Heart left ventricle (tissue), 16 donors: ENCODE measurements at regions of chr3 and their contacts with region 1.

Region 1: DNA sequence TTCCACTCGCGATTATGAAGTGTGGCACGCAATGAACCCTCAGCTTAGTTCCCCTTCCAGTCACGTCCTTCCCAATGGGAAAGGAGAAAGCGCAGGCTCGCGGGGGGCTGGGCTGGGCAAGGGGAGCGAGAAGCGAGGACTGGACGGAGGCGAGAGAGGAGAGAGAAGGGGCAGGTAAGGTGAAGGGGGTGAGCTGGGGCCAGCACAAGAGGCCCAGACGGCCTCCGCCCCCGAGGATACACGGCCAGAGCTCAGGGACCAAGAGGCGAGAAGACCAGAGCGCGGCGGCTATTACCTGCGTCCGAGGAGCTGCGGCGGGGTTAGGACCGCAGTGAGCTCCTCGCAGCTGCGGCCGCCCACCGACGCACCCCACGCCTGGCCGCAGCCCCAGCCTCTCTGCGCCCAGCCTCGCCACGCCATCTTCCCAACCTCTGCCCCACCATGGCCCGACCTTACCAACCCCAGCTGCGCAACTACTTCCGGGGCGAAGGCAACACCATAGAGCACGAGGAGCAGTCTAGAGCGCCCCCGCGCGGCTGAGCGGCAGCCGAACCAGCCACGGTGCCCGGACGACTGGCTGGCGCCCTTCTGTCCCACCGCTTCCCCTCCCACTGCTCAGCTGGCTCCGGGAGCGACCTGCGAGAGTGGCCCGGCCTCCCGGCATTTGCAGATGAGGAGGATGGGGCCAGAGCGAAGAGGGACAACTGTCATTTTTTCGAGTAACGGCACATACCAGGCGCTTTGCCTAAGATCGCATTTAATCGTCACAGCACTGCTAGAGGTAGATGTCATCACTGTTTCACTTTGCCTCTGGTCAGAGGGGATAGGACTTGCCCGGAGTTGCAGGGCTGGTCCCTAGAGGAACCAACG is at the start of gene PARL:
- DNase-seq: peak; percentile 95 to 98 (median 97)
- ATAC-seq: peak; percentile 100
- H3K4me3 ChIP-seq: peak within 1 kb of the TSS; percentile 54 to 99 (median 92)
- H3K27ac ChIP-seq: peak within 1 kb of the TSS; percentile 35 to 88 (median 82)
- H3K4me1 ChIP-seq: peaks cover 0 to 42% (median 23%) of the 10 kb centered on the region in 12 donors
- H3K27me3 ChIP-seq: no peaks in the 10 kb centered on the region
- CTCF ChIP-seq: peak; percentile 89 to 99 (median 96)
- POLR2A ChIP-seq: peak in 1 of 2 donors; percentile 57
- total RNA-seq, gene PARL: 37.9 to 62.2 (median 53.8) TPM

Region 2: GRCh38 chr3:183825456-183826161 is 59.1 kb before region 1 on chr3 and contains the start of gene MAP6D1:
- intact Hi-C with region 1: loop called in 1 of 10 experiments (anchors 5 kb)
- DNase-seq: peak in 3 of 5 donors; percentile 29 to 74 (median 30)
- ATAC-seq: peak in 3 of 4 donors; percentile 19 to 72 (median 61)
- H3K4me3 ChIP-seq: peak within 1 kb of the TSS; percentile 43 to 81 (median 63)
- H3K27ac ChIP-seq: peak within 1 kb of the TSS in 3 of 12 donors; percentile 18 to 56 (median 50)
- H3K4me1 ChIP-seq: peaks cover 0 to 31% (median 13%) of the 10 kb centered on the region in 12 donors
- H3K27me3 ChIP-seq: no peaks in the 10 kb centered on the region
- CTCF ChIP-seq: peak in 5 of 12 donors; percentile 9 to 46 (median 26)
- POLR2A ChIP-seq: no peak
- total RNA-seq, gene MAP6D1: 1.6 to 6.6 (median 2.3) TPM

Region 3: DNA sequence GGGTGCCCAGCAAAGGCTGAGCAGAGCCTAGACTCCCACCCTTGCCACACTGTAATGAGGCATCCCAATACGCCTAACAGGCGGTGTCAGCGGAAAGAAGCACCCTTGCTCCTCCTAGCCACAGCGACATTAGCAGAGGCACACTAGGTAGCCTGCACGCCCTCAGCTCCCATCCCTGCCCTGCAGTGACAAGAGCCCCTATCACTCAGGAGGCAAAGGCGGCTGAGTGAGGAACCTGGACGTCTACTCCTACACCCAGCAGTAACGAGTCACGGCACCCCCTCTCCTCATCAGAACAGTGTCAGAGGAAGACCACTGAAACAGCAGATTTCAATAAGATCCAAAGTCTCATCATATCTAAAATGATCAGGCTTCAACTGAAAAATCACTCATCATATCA is 47.3 kb before region 1 on chr3:
- intact Hi-C with region 1: no loop called
- DNase-seq: no peak
- ATAC-seq: no peak
- H3K4me3 ChIP-seq: no peak overlapping the region
- H3K27ac ChIP-seq: no peak overlapping the region
- H3K4me1 ChIP-seq: no peaks in the 10 kb centered on the region
- H3K27me3 ChIP-seq: no peaks in the 10 kb centered on the region
- CTCF ChIP-seq: no peak
- POLR2A ChIP-seq: no peak

Region 4: DNA sequence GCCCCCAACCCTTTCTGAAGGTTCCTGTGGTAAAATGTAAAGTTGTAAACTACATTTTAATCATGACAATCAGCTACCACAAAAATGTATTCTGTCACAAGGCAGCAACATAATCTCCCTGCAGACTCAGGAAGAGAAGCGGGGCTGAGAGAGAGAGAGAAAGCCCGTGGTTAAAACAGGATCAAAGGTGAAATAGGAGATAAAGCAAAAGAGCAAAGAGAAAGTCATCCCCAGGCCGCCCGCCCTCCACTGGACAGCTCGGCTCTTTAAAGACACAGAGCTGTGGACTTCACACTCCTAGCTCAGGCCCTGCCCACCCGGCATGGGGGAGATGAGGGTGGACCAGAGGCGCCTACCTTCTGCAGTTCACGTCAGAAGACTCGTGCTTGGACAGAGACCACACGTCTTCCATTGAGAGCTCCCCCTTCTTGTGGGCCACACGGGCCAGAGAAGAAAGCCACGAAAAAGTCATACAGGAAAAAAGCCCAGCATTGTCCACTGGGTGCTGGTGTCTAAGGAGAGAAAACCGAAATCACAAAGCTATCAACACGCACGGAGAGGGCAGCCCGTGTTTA is 103.6 kb after region 1 on chr3:
- intact Hi-C with region 1: no loop called
- DNase-seq: no peak
- ATAC-seq: peak in 1 of 4 donors; percentile 20
- H3K4me3 ChIP-seq: no peak overlapping the region
- H3K27ac ChIP-seq: no peak overlapping the region
- H3K4me1 ChIP-seq: no peaks in the 10 kb centered on the region
- H3K27me3 ChIP-seq: no peaks in the 10 kb centered on the region
- CTCF ChIP-seq: no peak
- POLR2A ChIP-seq: no peak